Activated CD8-positive, alpha-beta T cell treated with anti-CD3 and anti-CD28 coated beads, Interleukin-2, amount 10 ng/mL, durations not matched to agents 7 days and 5 days (primary cell): ENCODE measurements at regions of chr1 and their contacts with region 1.

Region 1: DNA sequence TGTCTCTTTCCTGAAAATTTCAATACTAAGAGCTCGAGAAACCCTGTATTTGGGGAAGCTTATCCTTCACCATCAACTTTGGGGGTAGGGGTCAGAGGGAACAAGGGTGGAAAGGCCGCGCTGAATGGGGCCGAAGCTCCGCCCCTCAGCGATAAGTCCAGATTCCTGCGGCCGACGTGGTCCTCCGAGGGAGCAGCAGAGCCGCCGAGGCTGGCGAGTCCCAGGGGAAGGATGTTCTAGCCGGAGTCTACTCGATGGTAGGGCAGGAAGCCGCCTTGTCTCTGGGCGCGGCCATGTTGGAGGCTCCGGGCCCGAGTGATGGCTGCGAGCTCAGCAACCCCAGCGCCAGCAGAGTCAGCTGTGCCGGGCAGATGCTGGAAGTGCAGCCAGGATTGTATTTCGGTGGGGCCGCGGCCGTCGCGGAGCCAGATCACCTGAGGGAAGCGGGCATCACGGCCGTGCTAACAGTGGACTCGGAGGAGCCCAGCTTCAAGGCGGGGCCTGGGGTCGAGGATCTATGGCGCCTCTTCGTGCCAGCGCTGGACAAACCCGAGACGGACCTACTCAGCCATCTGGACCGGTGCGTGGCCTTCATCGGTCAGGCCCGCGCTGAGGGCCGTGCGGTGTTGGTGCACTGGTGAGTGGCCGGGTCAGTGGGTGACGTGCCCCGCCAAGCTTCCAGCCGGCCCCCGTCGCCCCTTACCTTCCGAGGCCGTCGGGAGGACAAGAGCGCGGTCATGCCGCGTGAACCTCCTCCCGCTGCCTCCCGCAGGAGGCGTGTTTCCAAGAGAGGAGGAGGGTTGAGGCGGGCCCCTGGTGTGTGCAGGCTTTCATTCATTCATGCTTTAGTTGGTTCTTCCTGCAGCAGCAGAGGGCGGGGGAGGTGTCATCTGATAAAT is at the start of gene DUSP12:
- DNase-seq: peak; percentile 92
- ATAC-seq: peak; percentile 97
- H3K4me3 Mint-ChIP-seq: peak within 1 kb of the TSS; percentile 95
- H3K27ac Mint-ChIP-seq: peak within 1 kb of the TSS; percentile 96
- H3K4me1 Mint-ChIP-seq: peaks cover 46% of the 10 kb centered on the region
- H3K27me3 Mint-ChIP-seq: peaks cover 5% of the 10 kb centered on the region
- total RNA-seq, gene DUSP12: 24.1 to 27.6 TPM

Region 2: DNA sequence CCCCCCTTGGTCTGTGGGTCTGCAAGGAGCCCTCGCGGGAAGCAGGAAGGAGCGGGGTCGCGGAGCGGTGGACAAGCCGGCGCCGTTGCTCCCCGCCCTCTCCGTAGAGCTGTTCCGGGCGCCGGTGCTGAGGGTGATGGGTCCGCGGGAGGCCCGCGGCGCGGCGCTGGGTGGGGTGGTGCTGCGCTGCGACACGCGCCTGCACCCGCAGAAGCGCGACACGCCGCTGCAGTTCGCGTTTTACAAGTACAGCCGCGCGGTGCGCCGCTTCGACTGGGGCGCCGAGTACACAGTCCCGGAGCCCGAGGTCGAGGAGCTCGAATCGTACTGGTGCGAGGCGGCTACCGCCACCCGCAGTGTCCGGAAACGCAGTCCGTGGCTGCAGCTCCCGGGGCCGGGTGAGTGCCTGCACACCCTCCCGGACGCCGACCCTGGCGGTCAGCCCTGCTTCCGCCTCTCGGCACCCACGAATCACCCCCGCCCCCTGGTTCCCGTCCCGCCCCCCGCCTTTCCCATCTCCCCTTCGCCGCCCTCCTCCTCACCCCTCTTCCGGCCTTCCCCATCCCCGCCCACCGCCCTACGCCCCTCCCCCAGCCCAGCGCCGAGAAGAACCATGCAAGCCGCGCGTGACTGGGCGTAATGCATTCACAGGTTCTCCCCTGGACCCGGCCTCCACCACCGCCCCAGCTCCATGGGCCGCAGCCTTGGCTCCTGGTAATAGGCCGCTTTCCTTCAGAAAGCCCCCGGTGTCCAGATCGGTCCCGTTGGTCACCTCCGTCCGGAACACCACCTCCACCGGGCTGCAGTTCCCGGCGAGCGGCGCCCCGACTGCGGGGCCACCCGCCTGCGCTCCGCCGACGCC is 22.9 kb before region 1 on chr1:
- CTCF ChIA-PET with region 1: interaction called, 4 read pairs
- POLR2A ChIA-PET with region 1: interaction called, 13 read pairs
- DNase-seq: peak; percentile 85
- ATAC-seq: peak; percentile 71
- H3K4me3 Mint-ChIP-seq: peak overlapping the region; percentile 87
- H3K27ac Mint-ChIP-seq: peak overlapping the region; percentile 95
- H3K4me1 Mint-ChIP-seq: peaks cover 59% of the 10 kb centered on the region
- H3K27me3 Mint-ChIP-seq: peaks cover 22% of the 10 kb centered on the region

Region 3: GRCh38 chr1:161766102-161766981 is 16.6 kb after region 1 on chr1 and contains the start of gene ATF6:
- CTCF ChIA-PET with region 1: interaction called, 17 read pairs
- POLR2A ChIA-PET with region 1: interaction called, 9 read pairs
- DNase-seq: peak; percentile 88
- ATAC-seq: peak; percentile 72
- H3K4me3 Mint-ChIP-seq: peak within 1 kb of the TSS; percentile 99
- H3K27ac Mint-ChIP-seq: peak within 1 kb of the TSS; percentile 98
- H3K4me1 Mint-ChIP-seq: peaks cover 43% of the 10 kb centered on the region
- H3K27me3 Mint-ChIP-seq: no peaks in the 10 kb centered on the region
- total RNA-seq, gene ATF6: 15.2 to 17.1 TPM